ENCODE measurements at regions of chr9 and their contacts with region 1.

Region 1: DNA sequence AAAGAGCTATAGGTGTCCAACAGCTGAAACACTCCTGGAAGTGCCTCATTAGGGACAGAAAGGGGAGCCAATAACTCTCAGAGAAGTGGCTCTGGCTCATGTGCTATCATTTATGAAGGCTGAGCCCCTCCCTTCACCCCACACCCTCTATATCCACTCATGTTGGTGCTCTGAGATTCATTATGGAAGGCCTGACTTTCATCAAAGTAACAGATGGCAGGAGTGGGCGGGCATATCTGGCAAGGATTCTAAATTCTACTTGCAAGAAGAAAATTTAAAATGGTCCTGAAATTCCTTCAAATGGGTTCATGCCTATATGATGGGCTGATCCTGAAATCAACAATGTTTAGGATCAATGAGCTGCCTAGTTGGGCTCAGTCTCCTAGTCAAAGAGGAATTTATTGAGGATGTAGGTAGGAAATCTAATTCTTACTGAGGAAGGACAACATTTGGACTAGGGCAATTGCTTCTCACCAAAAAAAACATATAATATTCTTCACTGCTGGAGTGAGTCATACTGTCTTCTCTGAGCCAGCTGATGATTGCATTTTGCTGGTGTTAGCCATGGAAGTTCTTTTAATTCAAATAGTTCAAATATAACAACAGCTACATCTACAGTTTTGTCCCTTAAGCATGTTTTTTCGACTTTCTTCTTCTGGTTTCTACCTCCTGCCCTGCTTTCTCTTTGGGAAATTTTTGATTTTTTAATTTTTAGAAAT is 23.5 kb downstream of the NMRK1 start:
- DNase-seq: no peak
- H3K4me3 ChIP-seq: no peak overlapping the region
- H3K27ac ChIP-seq: no peak overlapping the region
- H3K4me1 ChIP-seq: no peaks in the 10 kb centered on the region
- H3K27me3 ChIP-seq: no peaks in the 10 kb centered on the region
- CTCF ChIP-seq: no peak
- EP300 ChIP-seq: no peak
- POLR2A ChIP-seq: no peak

Region 2: DNA sequence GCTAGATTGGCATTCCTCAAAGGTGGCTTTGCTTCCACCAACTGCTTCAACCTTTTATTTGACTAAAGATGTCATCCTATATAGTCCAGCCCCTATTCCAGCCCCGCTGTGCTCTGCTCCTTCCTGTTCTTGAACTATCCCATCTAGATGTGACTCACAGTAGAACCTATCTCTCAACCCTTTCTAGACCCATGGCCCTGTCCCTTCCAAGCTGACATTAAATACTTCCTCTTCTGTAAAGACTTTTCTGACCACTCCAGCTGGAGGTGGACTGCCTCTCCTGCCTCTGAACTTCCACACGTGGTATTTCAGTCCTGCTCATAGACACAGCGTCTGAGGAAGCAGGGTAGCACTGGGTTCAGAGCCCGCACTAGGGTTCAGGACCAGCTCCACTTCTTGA is 56.2 kb after region 1 on chr9:
- intact Hi-C with region 1: loop called in 1 of 4 experiments (anchors 10 kb)
- DNase-seq: no peak
- H3K4me3 ChIP-seq: no peak overlapping the region
- H3K27ac ChIP-seq: no peak overlapping the region
- H3K4me1 ChIP-seq: peaks cover 2% of the 10 kb centered on the region
- H3K27me3 ChIP-seq: no peaks in the 10 kb centered on the region
- CTCF ChIP-seq: no peak
- EP300 ChIP-seq: no peak
- POLR2A ChIP-seq: no peak

Measured in ovary (tissue), 10 donors.